ENCODE measurements at regions of chr17 and their contacts with region 1.

Region 1: DNA sequence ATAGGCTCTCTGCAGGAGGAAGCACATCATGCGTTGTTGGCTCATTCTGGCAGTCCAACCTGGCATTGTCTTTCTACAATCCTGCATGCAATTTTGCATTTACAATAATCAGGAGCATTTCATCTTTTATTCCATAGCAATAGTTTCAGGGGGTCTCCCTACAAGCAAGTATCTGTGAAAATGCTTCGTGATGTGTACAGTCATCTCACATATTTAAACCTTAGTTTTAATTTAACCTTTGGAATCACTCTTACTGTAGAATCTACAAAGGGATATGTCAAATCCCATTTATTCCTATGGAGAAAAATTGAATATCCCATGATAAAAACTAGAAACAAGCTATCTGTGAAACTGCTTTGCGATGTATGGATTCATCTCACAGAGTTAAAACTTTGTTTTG is 112.0 kb upstream of the WSB1 start:
- DNase-seq: no peak
- ATAC-seq: no peak
- H3K4me3 ChIP-seq: no peak overlapping the region
- H3K27ac ChIP-seq: no peak overlapping the region
- H3K4me1 ChIP-seq: no peaks in the 10 kb centered on the region
- H3K27me3 ChIP-seq: no peaks in the 10 kb centered on the region
- CTCF ChIP-seq: no peak
- POLR2A ChIP-seq: no peak
- RAD21 ChIP-seq: no peak

Region 2: DNA sequence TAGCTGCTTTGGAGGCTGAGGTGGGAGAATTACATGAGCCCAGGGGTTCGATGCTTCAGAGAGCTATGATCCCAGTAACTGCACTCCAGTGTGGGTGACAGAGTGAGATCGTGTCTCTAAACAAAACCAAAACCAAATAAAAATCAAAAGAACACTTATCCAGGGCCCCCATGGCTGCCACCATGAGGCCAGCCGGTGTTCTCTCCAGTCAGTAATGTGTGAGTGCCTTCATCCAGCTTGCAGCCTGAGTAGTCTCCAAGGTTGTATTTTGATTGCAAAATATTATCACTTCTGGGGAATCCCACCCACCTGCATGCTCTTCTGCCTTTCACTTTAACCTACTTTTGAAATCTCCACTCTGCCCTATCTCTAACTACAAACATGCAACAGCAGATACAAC is 109.0 kb before region 1 on chr17:
- CTCF ChIA-PET with region 1: no interaction called
- POLR2A ChIA-PET with region 1: no interaction called
- RAD21 ChIA-PET with region 1: no interaction called
- intact Hi-C with region 1: loop called (anchors 10 kb)
- DNase-seq: no peak
- ATAC-seq: no peak
- H3K4me3 ChIP-seq: no peak overlapping the region
- H3K27ac ChIP-seq: no peak overlapping the region
- H3K4me1 ChIP-seq: no peaks in the 10 kb centered on the region
- H3K27me3 ChIP-seq: no peaks in the 10 kb centered on the region
- CTCF ChIP-seq: no peak
- POLR2A ChIP-seq: no peak
- RAD21 ChIP-seq: no peak